CD8-positive, alpha-beta T cell (primary cell): ENCODE measurements at regions of chr4 and their contacts with region 1.

Region 1: GRCh38 chr4:169369634-169370033 is 98.9 kb upstream of the SH3RF1 start:
- DNase-seq: no peak
- ATAC-seq: no peak
- H3K4me3 ChIP-seq: no peak overlapping the region
- H3K4me3 Mint-ChIP-seq: no peak overlapping the region
- H3K27ac ChIP-seq: no peak overlapping the region
- H3K27ac Mint-ChIP-seq: no peak overlapping the region
- H3K4me1 ChIP-seq: no peaks in the 10 kb centered on the region
- H3K4me1 Mint-ChIP-seq: no peaks in the 10 kb centered on the region
- H3K27me3 ChIP-seq: no peaks in the 10 kb centered on the region
- H3K27me3 Mint-ChIP-seq: no peaks in the 10 kb centered on the region
- CTCF ChIP-seq: no peak

Region 2: DNA sequence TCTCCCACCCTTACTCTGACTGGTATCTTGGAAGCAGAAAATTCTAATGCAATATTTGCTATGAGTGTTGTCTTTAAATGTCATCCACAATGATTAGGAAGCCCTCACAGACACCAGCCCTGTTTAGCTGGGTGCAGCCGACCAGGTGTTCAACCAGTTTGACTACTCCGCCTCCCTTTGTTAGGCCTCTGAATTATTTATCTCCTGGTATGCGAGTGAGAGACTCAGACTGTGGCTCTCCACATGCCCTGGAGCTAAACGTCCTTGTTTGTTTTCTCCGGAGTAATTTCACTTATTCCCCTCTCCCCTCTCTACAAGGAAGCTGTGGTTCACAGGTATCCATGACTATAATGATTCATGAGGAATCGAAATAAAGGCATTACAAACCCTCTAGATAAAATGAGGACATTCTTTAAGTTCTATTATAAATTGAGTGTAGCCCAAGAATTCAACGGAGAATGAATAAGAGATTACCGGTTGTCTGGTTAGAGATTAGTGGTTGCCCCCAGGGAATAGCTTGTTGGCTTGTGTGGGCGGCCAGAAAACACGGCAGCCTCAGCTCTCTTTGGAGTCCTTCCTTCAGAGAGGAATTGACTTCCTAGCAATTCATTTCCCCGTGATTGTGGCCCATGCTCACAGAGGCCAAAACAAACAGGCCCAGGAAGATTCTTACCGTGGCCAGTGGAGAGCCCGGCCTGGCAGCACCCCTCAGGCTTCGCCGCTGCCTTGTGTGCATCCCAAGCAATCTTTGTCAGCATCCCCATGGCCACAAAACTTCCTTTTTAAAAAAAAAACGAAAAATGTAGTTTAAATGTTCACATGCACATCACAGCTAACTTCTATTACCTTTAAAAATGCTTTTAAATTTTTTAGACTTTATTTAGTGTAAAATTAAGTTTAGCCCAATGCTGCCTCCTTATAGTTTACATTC is 299.4 kb before region 1 on chr4:
- CTCF ChIA-PET with region 1: no interaction called
- POLR2A ChIA-PET with region 1: no interaction called
- intact Hi-C with region 1: no loop called
- DNase-seq: no peak
- ATAC-seq: no peak
- H3K4me3 ChIP-seq: no peak overlapping the region
- H3K4me3 Mint-ChIP-seq: no peak overlapping the region
- H3K27ac ChIP-seq: no peak overlapping the region
- H3K27ac Mint-ChIP-seq: no peak overlapping the region
- H3K4me1 ChIP-seq: no peaks in the 10 kb centered on the region
- H3K4me1 Mint-ChIP-seq: peaks cover 3% of the 10 kb centered on the region
- H3K27me3 ChIP-seq: no peaks in the 10 kb centered on the region
- H3K27me3 Mint-ChIP-seq: peaks cover 2% of the 10 kb centered on the region
- CTCF ChIP-seq: no peak

Region 3: GRCh38 chr4:169167958-169168858 is 201.4 kb before region 1 on chr4:
- CTCF ChIA-PET with region 1: no interaction called
- POLR2A ChIA-PET with region 1: no interaction called
- intact Hi-C with region 1: no loop called
- DNase-seq: no peak
- ATAC-seq: no peak
- H3K4me3 ChIP-seq: no peak overlapping the region
- H3K4me3 Mint-ChIP-seq: no peak overlapping the region
- H3K27ac ChIP-seq: no peak overlapping the region
- H3K27ac Mint-ChIP-seq: no peak overlapping the region
- H3K4me1 ChIP-seq: no peaks in the 10 kb centered on the region
- H3K4me1 Mint-ChIP-seq: no peaks in the 10 kb centered on the region
- H3K27me3 ChIP-seq: no peaks in the 10 kb centered on the region
- H3K27me3 Mint-ChIP-seq: peaks cover 4% of the 10 kb centered on the region
- CTCF ChIP-seq: no peak

Region 4: GRCh38 chr4:169385376-169385775 is 15.7 kb after region 1 on chr4:
- CTCF ChIA-PET with region 1: no interaction called
- POLR2A ChIA-PET with region 1: no interaction called
- intact Hi-C with region 1: loop called in 1 of 2 experiments (anchors 1 kb)
- DNase-seq: no peak
- ATAC-seq: no peak
- H3K4me3 ChIP-seq: no peak overlapping the region
- H3K4me3 Mint-ChIP-seq: no peak overlapping the region
- H3K27ac ChIP-seq: no peak overlapping the region
- H3K27ac Mint-ChIP-seq: no peak overlapping the region
- H3K4me1 ChIP-seq: no peaks in the 10 kb centered on the region
- H3K4me1 Mint-ChIP-seq: no peaks in the 10 kb centered on the region
- H3K27me3 ChIP-seq: no peaks in the 10 kb centered on the region
- H3K27me3 Mint-ChIP-seq: no peaks in the 10 kb centered on the region
- CTCF ChIP-seq: no peak